ENCODE measurements at regions of chr14 and their contacts with region 1.

Region 1: DNA sequence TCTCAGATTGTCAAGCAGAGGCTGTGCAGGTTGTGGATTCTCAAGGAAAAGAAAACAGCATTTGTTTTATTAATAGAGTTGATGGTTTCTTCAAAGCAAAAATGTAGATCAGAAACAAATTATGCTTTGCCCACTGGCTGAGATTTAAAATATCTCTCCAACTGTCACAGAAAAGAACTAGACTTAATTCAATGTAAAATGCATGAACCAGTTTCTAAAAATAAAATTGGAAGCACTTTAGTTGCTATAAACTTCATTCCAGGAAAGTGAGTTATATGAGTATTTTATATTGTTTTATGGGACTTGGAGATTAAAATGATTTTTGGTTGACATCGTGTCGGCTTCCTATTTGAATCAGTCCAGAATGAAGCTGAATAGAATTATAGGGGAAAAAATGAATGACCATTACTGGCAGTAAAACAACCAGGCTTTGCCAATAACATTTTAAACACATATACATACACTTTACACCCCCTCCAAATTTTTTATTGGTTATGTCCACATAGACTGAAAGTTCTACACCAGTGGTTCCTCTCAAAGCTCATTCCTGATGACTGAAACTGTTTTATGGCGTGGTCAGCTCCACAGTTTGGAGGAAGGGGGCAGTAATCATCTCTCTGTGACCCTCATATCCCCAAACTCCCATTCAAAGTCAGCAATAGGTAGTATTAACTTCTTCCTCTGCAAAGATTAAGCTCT is 55.5 kb upstream of the DAAM1 start:
- DNase-seq: no peak
- ATAC-seq: peak in 3 of 8 donors; percentile 28 to 41 (median 39)
- H3K4me3 ChIP-seq: no peak overlapping the region
- H3K27ac ChIP-seq: no peak overlapping the region
- H3K4me1 ChIP-seq: peaks cover 0 to 13% (median 0%) of the 10 kb centered on the region in 9 donors
- H3K27me3 ChIP-seq: no peaks in the 10 kb centered on the region
- CTCF ChIP-seq: peak in 5 of 9 donors; percentile 8 to 33 (median 28)

Region 2: DNA sequence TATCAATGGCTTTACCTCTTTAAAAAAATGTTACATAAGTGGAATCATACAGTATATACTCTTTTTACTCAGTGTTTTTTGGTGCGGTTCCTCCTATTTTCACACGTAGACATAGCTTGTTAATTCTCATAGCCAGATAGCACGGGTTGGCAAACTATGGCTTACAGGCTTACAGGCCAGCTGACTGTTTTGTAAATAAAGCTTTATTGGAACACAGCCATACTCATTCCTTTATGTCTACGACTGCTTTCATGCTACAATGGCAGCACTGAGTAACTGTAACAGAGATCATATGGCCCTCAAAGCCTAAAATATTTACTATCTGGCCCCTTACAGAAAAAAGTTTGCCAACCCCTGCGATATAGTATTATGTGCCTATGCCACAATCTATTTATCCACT is 49.7 kb after region 1 on chr14:
- intact Hi-C with region 1: loop called in 6 of 10 experiments (anchors 5 to 10 kb)
- DNase-seq: no peak
- ATAC-seq: no peak
- H3K4me3 ChIP-seq: no peak overlapping the region
- H3K27ac ChIP-seq: no peak overlapping the region
- H3K4me1 ChIP-seq: peaks cover 0 to 6% (median 0%) of the 10 kb centered on the region in 9 donors
- H3K27me3 ChIP-seq: peaks cover 0 to 7% (median 0%) of the 10 kb centered on the region in 7 donors
- CTCF ChIP-seq: no peak

Region 3: GRCh38 chr14:59320763-59321640 is 188.1 kb after region 1 on chr14:
- intact Hi-C with region 1: loop called in 1 of 10 experiments (anchors 10 kb)
- DNase-seq: no peak
- ATAC-seq: peak; percentile 62 to 87 (median 80)
- H3K4me3 ChIP-seq: peak overlapping the region in 1 of 10 donors; percentile 3
- H3K27ac ChIP-seq: peak overlapping the region; percentile 26 to 87 (median 76)
- H3K4me1 ChIP-seq: peaks cover 10 to 76% (median 57%) of the 10 kb centered on the region in 9 donors
- H3K27me3 ChIP-seq: no peaks in the 10 kb centered on the region
- CTCF ChIP-seq: no peak